Activated CD4-positive, alpha-beta T cell treated with anti-CD3 and anti-CD28 coated beads for 36 hours (primary cell): ENCODE measurements at regions of chr20 and their contacts with region 1.

Region 1: DNA sequence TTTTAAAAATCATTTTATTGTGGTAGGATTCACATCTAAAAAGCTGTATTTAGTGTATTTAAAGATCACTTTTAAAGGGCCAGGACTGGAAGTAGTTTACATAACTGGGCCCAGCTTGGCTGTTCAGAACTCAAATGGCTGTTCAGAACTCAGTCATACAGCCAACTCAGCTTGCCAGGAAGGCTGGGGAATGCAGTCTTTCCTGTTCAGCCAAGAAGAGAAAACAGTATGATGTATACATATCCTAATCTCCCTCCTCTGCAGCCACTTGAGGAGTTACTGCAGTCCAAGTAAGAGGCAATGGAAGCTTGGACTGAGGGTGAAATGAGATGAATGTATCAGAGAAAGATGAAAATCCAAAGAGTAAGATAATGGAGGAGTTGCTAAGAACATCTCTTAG is 24.6 kb downstream of the DSTN start:
- DNase-seq: no peak
- ATAC-seq: no peak
- H3K4me3 Mint-ChIP-seq: no peak overlapping the region
- H3K27ac Mint-ChIP-seq: no peak overlapping the region
- H3K4me1 Mint-ChIP-seq: peaks cover 33% of the 10 kb centered on the region
- H3K27me3 Mint-ChIP-seq: no peaks in the 10 kb centered on the region

Region 2: DNA sequence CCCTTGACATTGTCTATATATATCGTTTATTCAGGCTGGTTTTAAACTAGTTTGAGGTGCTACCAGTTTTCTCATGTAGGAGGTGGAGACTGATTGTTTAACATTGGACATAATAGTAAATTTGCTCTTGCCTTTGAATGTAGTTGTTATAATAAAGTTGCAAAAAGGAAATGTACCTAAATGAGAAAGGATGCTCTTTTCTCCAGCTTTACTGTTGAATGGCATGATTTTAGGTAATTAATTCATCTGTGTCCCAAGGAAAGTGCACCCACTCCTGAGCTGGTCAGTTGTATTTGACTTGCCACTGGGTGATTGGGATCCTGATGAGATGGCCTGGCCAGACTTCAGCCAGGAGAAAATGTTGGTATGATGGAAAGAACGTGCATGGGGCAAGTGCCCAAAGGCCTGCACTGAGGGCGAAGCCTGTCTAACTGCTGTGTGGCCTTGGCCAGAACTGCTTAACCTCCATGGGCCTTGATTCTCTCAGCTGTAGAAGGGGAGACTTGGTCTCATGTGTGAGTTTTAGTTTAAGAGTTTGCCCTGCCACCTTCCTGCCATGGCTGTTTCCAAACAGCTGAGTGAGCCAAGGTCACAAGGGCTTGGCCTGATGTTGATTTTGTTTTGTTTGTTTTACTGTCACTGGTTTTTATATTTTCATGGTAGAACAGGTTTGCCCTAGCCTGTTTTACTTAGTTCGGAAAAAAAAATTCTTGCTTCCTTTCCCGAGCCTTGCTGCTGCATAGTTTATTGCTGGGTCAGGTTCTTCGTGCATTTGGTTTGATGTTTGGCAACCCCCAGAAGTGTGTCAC is 10.6 kb after region 1 on chr20:
- CTCF ChIA-PET with region 1: interaction called, 10 read pairs
- POLR2A ChIA-PET with region 1: no interaction called
- intact Hi-C with region 1: no loop called
- DNase-seq: no peak
- ATAC-seq: no peak
- H3K4me3 Mint-ChIP-seq: no peak overlapping the region
- H3K27ac Mint-ChIP-seq: no peak overlapping the region
- H3K4me1 Mint-ChIP-seq: peaks cover 11% of the 10 kb centered on the region
- H3K27me3 Mint-ChIP-seq: no peaks in the 10 kb centered on the region

Region 3: DNA sequence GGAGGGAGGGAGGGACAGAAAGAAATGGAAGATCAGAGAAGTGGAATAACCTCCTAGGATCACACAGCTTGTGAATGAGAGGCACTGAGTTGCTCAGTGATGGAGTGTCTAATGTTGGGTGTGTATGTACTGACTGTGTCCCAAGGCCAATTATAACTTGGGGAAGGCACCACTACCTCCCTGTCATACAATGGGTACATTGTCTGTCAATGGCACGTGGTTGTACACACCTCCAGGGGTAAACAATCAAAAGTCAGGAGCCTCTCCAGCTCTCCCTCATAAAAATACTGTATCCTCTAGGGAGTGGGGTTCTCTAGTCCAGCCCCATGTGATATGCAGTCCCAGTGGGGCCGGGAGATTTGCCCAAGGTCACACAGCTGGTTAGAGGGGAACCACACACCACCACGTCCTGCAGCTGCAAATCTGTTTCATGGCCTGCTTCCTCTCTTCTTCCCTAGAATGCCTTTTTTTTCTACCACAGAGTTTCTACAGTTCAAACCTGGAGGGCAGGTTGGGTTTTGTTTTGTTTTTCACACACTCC is 261.7 kb after region 1 on chr20:
- CTCF ChIA-PET with region 1: no interaction called
- POLR2A ChIA-PET with region 1: no interaction called
- intact Hi-C with region 1: no loop called
- DNase-seq: peak; percentile 51
- ATAC-seq: peak; percentile 59
- H3K4me3 Mint-ChIP-seq: no peak overlapping the region
- H3K27ac Mint-ChIP-seq: no peak overlapping the region
- H3K4me1 Mint-ChIP-seq: peaks cover 40% of the 10 kb centered on the region
- H3K27me3 Mint-ChIP-seq: peaks cover 2% of the 10 kb centered on the region